A549 (cell line): ENCODE measurements at regions of chr20 and their contacts with region 1.

Region 1: GRCh38 chr20:37192137-37192854 is 12.9 kb upstream of the MROH8 start:
- DNase-seq: peak; percentile 75 to 82
- ATAC-seq: peak; percentile 91 to 94
- H3K4me3 ChIP-seq: no peak overlapping the region
- H3K27ac ChIP-seq: no peak overlapping the region
- H3K4me1 ChIP-seq: peaks cover 3% of the 10 kb centered on the region; the same call in 1 of the 3 replicates
- CTCF ChIP-seq: peak; percentile 76
- EP300 ChIP-seq: no peak
- POLR2A ChIP-seq: no peak
- RAD21 ChIP-seq: 0 out of 5 replicates have a peak, but pooled peaks have one; percentile 13 to 16

Region 2: GRCh38 chr20:36988494-36988966 is 203.8 kb before region 1 on chr20:
- CTCF ChIA-PET with region 1: no interaction called
- POLR2A ChIA-PET with region 1: no interaction called
- DNase-seq: no peak
- ATAC-seq: no peak
- H3K4me3 ChIP-seq: no peak overlapping the region
- H3K27ac ChIP-seq: no peak overlapping the region
- H3K4me1 ChIP-seq: no peaks in the 10 kb centered on the region
- CTCF ChIP-seq: no peak
- EP300 ChIP-seq: no peak
- POLR2A ChIP-seq: no peak
- RAD21 ChIP-seq: no peak

Region 3: GRCh38 chr20:37178839-37179670 is 13.2 kb before region 1 on chr20 and contains the starts of genes MROH8 and RPN2:
- CTCF ChIA-PET with region 1: interaction called, 51 read pairs
- POLR2A ChIA-PET with region 1: interaction called, 9 read pairs
- DNase-seq: peak; percentile 93 to 98
- ATAC-seq: peak; percentile 98
- H3K4me3 ChIP-seq: peak within 1 kb of the TSS; percentile 82
- H3K27ac ChIP-seq: peak within 1 kb of the TSS; percentile 92 to 99
- H3K4me1 ChIP-seq: peaks cover 14% of the 10 kb centered on the region
- CTCF ChIP-seq: no peak
- EP300 ChIP-seq: no peak
- POLR2A ChIP-seq: peak; percentile 56
- RAD21 ChIP-seq: no peak
- polyA plus RNA-seq, gene MROH8: 3.3 and 3.9 TPM in 2 replicates
- polyA plus RNA-seq, gene RPN2: 391 and 485 TPM in 2 replicates

Region 4: GRCh38 chr20:37202267-37202943 is 10.1 kb after region 1 on chr20:
- CTCF ChIA-PET with region 1: interaction called, 105 read pairs
- POLR2A ChIA-PET with region 1: no interaction called
- DNase-seq: peak; percentile 70 to 72
- ATAC-seq: peak; percentile 87 to 89
- H3K4me3 ChIP-seq: no peak overlapping the region
- H3K27ac ChIP-seq: no peak overlapping the region
- H3K4me1 ChIP-seq: peaks cover 7% of the 10 kb centered on the region; the same call in 2 of the 3 replicates
- CTCF ChIP-seq: peak; percentile 86
- EP300 ChIP-seq: no peak
- POLR2A ChIP-seq: no peak
- RAD21 ChIP-seq: peak; percentile 28 to 33

Region 5: DNA sequence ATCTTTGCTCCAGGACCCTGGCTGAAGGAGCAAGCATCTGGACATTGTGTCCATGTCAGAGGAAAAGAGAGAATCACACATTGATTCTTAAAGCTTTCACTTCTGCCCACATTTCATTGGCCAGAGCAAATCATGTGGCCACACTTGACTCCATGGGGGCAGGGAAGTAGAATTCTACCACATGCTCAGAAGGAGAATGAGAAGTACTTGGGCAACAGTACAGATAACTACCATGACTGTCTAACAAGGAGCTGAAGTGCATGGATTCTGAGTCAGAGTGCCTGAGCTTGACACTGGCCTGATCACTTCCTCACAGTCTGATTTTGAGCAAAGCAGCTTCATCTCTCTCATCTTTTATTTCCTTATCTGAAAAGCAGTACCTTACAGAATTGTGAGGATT is 30.8 kb after region 1 on chr20:
- CTCF ChIA-PET with region 1: interaction called, 11 read pairs
- POLR2A ChIA-PET with region 1: no interaction called
- DNase-seq: peak in 1 of 2 experiments; percentile 29
- ATAC-seq: peak; percentile 56 to 77; a peak in 4 of 6 replicates
- H3K4me3 ChIP-seq: no peak overlapping the region
- H3K27ac ChIP-seq: no peak overlapping the region
- H3K4me1 ChIP-seq: no peaks in the 10 kb centered on the region
- CTCF ChIP-seq: no peak
- EP300 ChIP-seq: no peak
- POLR2A ChIP-seq: no peak
- RAD21 ChIP-seq: no peak

Region 6: GRCh38 chr20:37251825-37252477 is 59.7 kb after region 1 on chr20:
- CTCF ChIA-PET with region 1: interaction called, 11 read pairs
- POLR2A ChIA-PET with region 1: no interaction called
- DNase-seq: no peak
- ATAC-seq: no peak
- H3K4me3 ChIP-seq: no peak overlapping the region
- H3K27ac ChIP-seq: no peak overlapping the region
- H3K4me1 ChIP-seq: no peaks in the 10 kb centered on the region
- CTCF ChIP-seq: no peak
- EP300 ChIP-seq: no peak
- POLR2A ChIP-seq: no peak
- RAD21 ChIP-seq: no peak